AG04450 (cell line): ENCODE measurements at regions of chr19 and their contacts with region 1.

Region 1: GRCh38 chr19:13302526-13303270 is 152.5 kb downstream of the IER2 start:
- DNase-seq: no peak
- H3K4me3 ChIP-seq: no peak overlapping the region
- H3K27ac ChIP-seq: no peak overlapping the region
- H3K27me3 ChIP-seq: no peaks in the 10 kb centered on the region
- CTCF ChIP-seq: no peak

Region 2: DNA sequence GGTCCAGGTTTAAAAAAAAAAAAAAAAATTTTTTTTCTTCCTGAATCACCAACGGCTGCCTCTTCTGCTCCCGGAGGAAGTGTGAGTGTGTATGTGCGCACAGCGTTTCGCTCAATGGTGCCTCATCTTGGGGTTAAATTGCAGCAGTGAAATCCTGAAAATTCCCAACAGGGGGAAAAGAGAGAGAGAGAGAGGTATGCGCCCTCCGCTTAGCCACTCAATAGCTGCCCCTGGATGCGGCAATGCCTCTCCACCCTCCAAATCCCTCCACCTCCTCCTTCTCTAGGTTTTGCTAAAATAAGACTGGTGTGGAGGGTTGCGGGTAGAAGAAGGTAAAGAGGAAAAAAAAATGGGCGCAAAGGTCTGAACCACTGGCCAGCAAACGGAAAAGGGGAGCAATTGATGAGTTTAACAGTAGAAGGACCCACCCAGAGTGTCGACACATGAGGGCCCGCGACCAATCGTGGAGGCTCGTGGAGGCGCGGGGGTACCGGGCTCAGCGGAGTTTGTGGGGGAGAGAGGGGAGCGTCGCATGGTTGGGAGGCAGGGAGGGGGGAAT is 204.4 kb after region 1 on chr19:
- CTCF ChIA-PET with region 1: no interaction called
- POLR2A ChIA-PET with region 1: interaction called, 12 read pairs
- DNase-seq: no peak
- H3K4me3 ChIP-seq: peak overlapping the region; percentile 68
- H3K27ac ChIP-seq: no peak overlapping the region
- H3K27me3 ChIP-seq: peaks cover 17% of the 10 kb centered on the region
- CTCF ChIP-seq: no peak